CD4-positive, alpha-beta T cell (primary cell): ENCODE measurements at regions of chrX and their contacts with region 1.

Region 1: DNA sequence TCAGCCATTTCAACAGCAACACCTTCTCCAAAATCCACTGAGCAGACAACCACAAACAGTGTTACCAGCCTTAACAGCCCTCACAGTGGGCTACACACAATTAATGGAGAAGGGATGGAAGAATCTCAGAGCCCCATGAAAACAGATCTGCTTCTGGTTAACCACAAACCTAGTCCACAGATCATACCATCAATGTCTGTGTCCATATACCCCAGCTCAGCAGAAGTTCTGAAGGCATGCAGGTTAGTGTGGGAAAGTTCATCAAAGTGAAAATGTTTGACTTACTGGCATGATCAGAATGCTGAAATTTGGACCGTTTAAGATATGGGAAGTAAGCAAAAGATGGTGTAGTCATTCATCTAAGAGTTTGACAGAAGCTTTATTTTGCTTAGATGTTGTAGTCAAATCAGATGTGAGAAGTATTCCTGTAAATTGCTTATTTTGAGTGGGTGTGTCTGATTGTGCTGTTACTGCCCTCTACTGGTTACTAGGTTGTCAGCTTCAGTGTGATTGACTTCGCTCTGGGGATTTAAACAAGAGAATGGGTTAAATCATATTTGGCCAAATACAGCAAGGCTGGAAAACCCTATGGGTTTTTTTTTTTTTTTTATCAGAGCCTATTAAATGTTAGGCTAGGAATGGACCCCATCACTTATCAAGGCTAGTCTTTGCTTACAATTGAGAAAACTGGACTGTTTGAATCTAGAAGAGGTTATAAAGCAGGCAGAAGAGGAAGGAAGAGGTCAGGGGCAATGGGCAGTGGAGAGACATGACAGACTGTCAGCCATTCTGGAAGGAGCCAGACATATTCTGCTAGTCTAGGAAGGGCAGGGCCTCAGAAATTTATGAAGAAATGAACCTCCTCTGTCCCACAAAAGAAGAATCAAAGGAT is 130.3 kb downstream of the DIPK2B start:
- DNase-seq: peak in 5 of 14 experiments; percentile 4 to 67 (median 60)
- ATAC-seq: peak; percentile 43
- H3K4me3 ChIP-seq: no peak overlapping the region
- H3K4me3 Mint-ChIP-seq: peak overlapping the region; percentile 13
- H3K27ac ChIP-seq: no peak overlapping the region
- H3K27ac Mint-ChIP-seq: peak overlapping the region; percentile 31
- H3K4me1 ChIP-seq: peaks cover 16% of the 10 kb centered on the region
- H3K4me1 Mint-ChIP-seq: peaks cover 74% of the 10 kb centered on the region
- H3K27me3 ChIP-seq: no peaks in the 10 kb centered on the region
- H3K27me3 Mint-ChIP-seq: no peaks in the 10 kb centered on the region
- CTCF ChIP-seq: peak; percentile 64

Region 2: DNA sequence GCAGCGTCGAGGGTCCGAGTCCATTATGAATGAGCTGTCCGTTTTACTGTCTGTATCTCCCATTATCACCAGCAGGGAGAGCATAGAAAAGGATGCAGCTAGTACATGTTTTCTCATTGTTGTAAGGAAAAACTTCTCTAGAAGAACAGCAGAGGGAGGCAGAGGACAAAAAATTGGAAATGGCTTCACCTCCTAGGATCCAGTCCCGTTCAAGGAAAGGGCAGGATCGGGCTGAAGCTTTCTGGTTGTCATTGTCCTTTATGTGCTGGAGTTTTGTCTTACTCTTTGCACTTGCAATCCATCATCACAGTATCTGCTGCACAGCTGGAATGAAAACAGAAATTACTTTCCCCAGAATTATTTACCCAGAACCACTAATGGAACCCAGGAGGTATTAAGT is 1111.8 kb before region 1 on chrX:
- CTCF ChIA-PET with region 1: no interaction called
- POLR2A ChIA-PET with region 1: no interaction called
- intact Hi-C with region 1: loop called in 1 of 2 experiments (anchors 2 kb)
- DNase-seq: peak in 5 of 14 experiments; percentile 6 to 75 (median 63)
- ATAC-seq: peak; percentile 73
- H3K4me3 ChIP-seq: no peak overlapping the region
- H3K4me3 Mint-ChIP-seq: no peak overlapping the region
- H3K27ac ChIP-seq: no peak overlapping the region
- H3K27ac Mint-ChIP-seq: no peak overlapping the region
- H3K4me1 ChIP-seq: peaks cover 3% of the 10 kb centered on the region
- H3K4me1 Mint-ChIP-seq: peaks cover 6% of the 10 kb centered on the region
- H3K27me3 ChIP-seq: no peaks in the 10 kb centered on the region
- H3K27me3 Mint-ChIP-seq: peaks cover 6% of the 10 kb centered on the region
- CTCF ChIP-seq: peak; percentile 77

Region 3: GRCh38 chrX:44529310-44529709 is 541.1 kb before region 1 on chrX:
- CTCF ChIA-PET with region 1: no interaction called
- POLR2A ChIA-PET with region 1: no interaction called
- intact Hi-C with region 1: loop called in 1 of 2 experiments (anchors 5 kb)
- DNase-seq: no peak
- ATAC-seq: no peak
- H3K4me3 ChIP-seq: no peak overlapping the region
- H3K4me3 Mint-ChIP-seq: no peak overlapping the region
- H3K27ac ChIP-seq: no peak overlapping the region
- H3K27ac Mint-ChIP-seq: no peak overlapping the region
- H3K4me1 ChIP-seq: no peaks in the 10 kb centered on the region
- H3K4me1 Mint-ChIP-seq: peaks cover 12% of the 10 kb centered on the region
- H3K27me3 ChIP-seq: no peaks in the 10 kb centered on the region
- H3K27me3 Mint-ChIP-seq: no peaks in the 10 kb centered on the region
- CTCF ChIP-seq: no peak

Region 4: DNA sequence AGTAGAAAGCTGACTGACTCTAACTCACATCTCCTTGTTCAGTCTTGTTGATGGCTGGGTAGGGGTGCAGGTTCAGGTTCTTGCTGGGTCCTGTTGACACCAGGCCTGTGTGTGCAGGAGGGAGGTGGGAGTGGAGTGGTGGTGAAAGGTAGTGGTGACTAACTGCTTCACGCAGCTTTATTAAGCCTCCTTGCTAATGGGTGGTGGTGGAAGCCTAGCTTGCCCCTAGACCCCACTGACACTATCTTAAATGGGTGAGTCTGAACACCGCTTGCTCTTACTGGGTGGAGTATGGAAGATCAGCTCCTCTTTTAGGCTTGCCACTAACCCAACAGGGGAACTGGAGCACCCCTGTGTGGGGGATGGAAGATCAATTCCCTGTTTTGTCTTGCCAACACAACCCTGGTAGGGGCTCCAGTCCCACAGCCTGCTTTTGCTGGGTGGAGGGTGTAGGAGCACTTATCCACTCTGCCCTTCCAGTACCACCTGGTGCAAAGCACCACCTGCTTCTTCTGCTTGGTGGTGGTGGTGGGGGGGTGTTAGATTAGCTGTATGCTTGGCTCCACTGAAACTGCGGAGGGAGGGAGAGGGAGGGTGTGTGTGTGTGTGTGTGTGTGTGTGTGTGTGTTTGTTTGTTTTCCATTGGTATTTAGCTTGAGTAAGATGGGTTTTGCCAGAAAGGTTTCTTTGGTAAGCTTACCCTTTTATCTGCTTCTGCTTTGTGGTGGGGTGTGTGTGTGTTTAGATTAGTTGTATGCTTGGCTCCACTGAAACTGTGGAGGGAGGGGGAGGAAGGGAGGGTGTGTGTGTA is 171.7 kb before region 1 on chrX:
- CTCF ChIA-PET with region 1: interaction called, 10 read pairs
- POLR2A ChIA-PET with region 1: interaction called, 3 read pairs
- intact Hi-C with region 1: no loop called
- DNase-seq: peak in 5 of 14 experiments; percentile 1 to 17 (median 11)
- ATAC-seq: peak; percentile 17
- H3K4me3 ChIP-seq: no peak overlapping the region
- H3K4me3 Mint-ChIP-seq: peak overlapping the region; percentile 45
- H3K27ac ChIP-seq: no peak overlapping the region
- H3K27ac Mint-ChIP-seq: peak overlapping the region; percentile 44
- H3K4me1 ChIP-seq: peaks cover 16% of the 10 kb centered on the region
- H3K4me1 Mint-ChIP-seq: peaks cover 40% of the 10 kb centered on the region
- H3K27me3 ChIP-seq: no peaks in the 10 kb centered on the region
- H3K27me3 Mint-ChIP-seq: no peaks in the 10 kb centered on the region
- CTCF ChIP-seq: no peak